CD4-positive, alpha-beta T cell (primary cell): ENCODE measurements at regions of chr19 and their contacts with region 1.

Region 1: GRCh38 chr19:29735800-29736199 is 20.7 kb upstream of the C19orf12 start:
- DNase-seq: no peak
- ATAC-seq: no peak
- H3K4me3 ChIP-seq: no peak overlapping the region
- H3K4me3 Mint-ChIP-seq: no peak overlapping the region
- H3K27ac ChIP-seq: no peak overlapping the region
- H3K27ac Mint-ChIP-seq: no peak overlapping the region
- H3K4me1 ChIP-seq: no peaks in the 10 kb centered on the region
- H3K4me1 Mint-ChIP-seq: no peaks in the 10 kb centered on the region
- H3K27me3 ChIP-seq: no peaks in the 10 kb centered on the region
- H3K27me3 Mint-ChIP-seq: peaks cover 10% of the 10 kb centered on the region
- CTCF ChIP-seq: no peak

Region 2: GRCh38 chr19:29704562-29705558 is 30.9 kb before region 1 on chr19:
- CTCF ChIA-PET with region 1: no interaction called
- POLR2A ChIA-PET with region 1: no interaction called
- intact Hi-C with region 1: no loop called
- DNase-seq: peak in 2 of 14 experiments; percentile 27 to 43
- ATAC-seq: peak; percentile 34
- H3K4me3 ChIP-seq: no peak overlapping the region
- H3K4me3 Mint-ChIP-seq: no peak overlapping the region
- H3K27ac ChIP-seq: no peak overlapping the region
- H3K27ac Mint-ChIP-seq: peak overlapping the region; percentile 85
- H3K4me1 ChIP-seq: peaks cover 21% of the 10 kb centered on the region
- H3K4me1 Mint-ChIP-seq: peaks cover 23% of the 10 kb centered on the region
- H3K27me3 ChIP-seq: no peaks in the 10 kb centered on the region
- H3K27me3 Mint-ChIP-seq: no peaks in the 10 kb centered on the region
- CTCF ChIP-seq: no peak

Region 3: GRCh38 chr19:29724102-29724641 is 11.6 kb before region 1 on chr19:
- CTCF ChIA-PET with region 1: no interaction called
- POLR2A ChIA-PET with region 1: no interaction called
- intact Hi-C with region 1: no loop called
- DNase-seq: peak in 7 of 14 experiments; percentile 9 to 54 (median 41)
- ATAC-seq: peak; percentile 74
- H3K4me3 ChIP-seq: peak overlapping the region; percentile 48
- H3K4me3 Mint-ChIP-seq: peak overlapping the region; percentile 83
- H3K27ac ChIP-seq: no peak overlapping the region
- H3K27ac Mint-ChIP-seq: peak overlapping the region; percentile 53
- H3K4me1 ChIP-seq: peaks cover 13% of the 10 kb centered on the region
- H3K4me1 Mint-ChIP-seq: peaks cover 6% of the 10 kb centered on the region
- H3K27me3 ChIP-seq: peaks cover 5 to 10% of the 10 kb centered on the region in 2 experiments
- H3K27me3 Mint-ChIP-seq: peaks cover 26% of the 10 kb centered on the region
- CTCF ChIP-seq: no peak

Region 4: DNA sequence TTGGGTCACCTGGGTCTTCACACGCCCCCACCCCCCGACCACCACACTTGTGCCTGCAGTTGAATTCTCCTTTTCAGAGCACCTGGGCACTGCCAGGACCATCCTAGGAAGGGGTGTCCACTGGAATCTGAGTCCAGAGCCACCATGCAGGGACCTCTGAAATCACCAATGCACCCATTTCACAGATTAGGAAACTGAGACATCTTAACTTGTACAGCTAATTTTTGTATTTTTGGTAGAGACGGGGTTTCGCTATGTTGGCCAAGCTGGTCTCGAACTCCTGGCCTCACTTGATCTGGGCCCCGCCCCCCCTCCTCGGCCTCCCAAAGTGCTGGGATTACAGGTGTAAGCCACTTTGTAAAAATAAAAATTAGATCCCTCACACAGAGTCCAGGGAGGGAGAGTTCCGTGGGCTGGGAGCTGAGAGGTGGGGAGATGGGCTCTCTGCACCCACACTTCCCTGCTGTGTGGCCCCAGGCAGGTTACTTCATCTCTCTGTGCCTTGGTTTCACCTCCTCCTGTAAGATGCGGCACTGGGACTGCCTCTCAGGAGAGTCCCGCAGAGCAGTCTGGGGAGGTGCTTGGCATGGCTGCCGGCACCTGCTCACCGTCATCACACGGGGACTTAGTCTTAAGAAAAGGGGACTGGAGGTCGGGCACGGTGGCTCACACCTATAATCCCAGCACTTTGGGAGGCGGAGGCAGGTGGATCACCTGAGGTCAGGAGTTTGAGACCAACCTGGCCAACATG is 25.1 kb after region 1 on chr19:
- CTCF ChIA-PET with region 1: interaction called, 8 read pairs
- POLR2A ChIA-PET with region 1: no interaction called
- intact Hi-C with region 1: loop called (anchors 1 kb)
- DNase-seq: no peak
- ATAC-seq: no peak
- H3K4me3 ChIP-seq: no peak overlapping the region
- H3K4me3 Mint-ChIP-seq: no peak overlapping the region
- H3K27ac ChIP-seq: no peak overlapping the region
- H3K27ac Mint-ChIP-seq: no peak overlapping the region
- H3K4me1 ChIP-seq: peaks cover 9% of the 10 kb centered on the region
- H3K4me1 Mint-ChIP-seq: no peaks in the 10 kb centered on the region
- H3K27me3 ChIP-seq: peaks cover 0 to 3% of the 10 kb centered on the region in 2 experiments
- H3K27me3 Mint-ChIP-seq: no peaks in the 10 kb centered on the region
- CTCF ChIP-seq: no peak

Region 5: DNA sequence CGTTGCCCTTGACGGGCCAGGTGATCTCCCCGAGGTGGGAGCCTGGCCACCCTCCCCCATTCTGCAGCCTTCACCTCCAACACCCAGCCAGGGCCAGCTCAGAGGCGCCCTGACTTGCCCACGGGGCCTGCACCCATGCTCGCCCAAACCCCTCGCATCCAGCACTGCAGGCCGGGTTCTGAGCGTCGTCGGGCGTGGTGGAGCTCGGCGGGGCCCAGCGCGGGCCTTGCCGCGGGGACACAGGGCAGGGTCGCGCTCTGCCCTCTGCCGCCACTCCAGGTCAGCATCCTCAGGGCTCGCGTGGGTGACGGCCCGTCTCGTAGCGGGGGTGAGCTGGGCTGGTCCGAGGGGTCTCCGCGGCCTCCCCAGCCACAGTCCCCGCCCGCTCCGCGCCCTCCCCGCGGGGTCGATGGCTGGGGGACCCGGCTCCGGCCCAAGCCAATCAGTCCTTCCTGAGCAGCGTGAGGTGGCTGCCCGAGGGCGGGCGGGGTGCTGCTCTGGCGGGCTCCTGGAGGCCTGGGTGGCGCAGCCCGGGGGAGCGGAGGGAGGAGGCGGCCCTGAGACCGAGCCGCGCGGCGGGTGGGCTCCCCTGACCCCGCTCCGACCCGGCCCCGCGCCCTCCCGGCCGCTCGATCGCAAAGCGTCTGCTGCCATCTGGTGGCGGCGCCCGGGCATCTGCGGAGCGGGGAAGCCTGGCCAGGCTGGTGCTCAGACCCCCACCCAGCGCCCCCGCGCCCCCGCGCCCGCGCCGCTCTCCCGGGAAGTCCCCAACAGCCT is 137.4 kb after region 1 on chr19:
- CTCF ChIA-PET with region 1: interaction called, 14 read pairs
- POLR2A ChIA-PET with region 1: interaction called, 13 read pairs
- intact Hi-C with region 1: loop called (anchors 1 kb)
- DNase-seq: peak; percentile 41 to 84 (median 62)
- ATAC-seq: peak; percentile 83
- H3K4me3 ChIP-seq: peak overlapping the region; percentile 12
- H3K4me3 Mint-ChIP-seq: peak overlapping the region; percentile 70
- H3K27ac ChIP-seq: no peak overlapping the region
- H3K27ac Mint-ChIP-seq: no peak overlapping the region
- H3K4me1 ChIP-seq: peaks cover 17% of the 10 kb centered on the region
- H3K4me1 Mint-ChIP-seq: no peaks in the 10 kb centered on the region
- H3K27me3 ChIP-seq: peaks cover 12 to 13% of the 10 kb centered on the region in 2 experiments
- H3K27me3 Mint-ChIP-seq: peaks cover 38% of the 10 kb centered on the region
- CTCF ChIP-seq: peak; percentile 87

Region 6: DNA sequence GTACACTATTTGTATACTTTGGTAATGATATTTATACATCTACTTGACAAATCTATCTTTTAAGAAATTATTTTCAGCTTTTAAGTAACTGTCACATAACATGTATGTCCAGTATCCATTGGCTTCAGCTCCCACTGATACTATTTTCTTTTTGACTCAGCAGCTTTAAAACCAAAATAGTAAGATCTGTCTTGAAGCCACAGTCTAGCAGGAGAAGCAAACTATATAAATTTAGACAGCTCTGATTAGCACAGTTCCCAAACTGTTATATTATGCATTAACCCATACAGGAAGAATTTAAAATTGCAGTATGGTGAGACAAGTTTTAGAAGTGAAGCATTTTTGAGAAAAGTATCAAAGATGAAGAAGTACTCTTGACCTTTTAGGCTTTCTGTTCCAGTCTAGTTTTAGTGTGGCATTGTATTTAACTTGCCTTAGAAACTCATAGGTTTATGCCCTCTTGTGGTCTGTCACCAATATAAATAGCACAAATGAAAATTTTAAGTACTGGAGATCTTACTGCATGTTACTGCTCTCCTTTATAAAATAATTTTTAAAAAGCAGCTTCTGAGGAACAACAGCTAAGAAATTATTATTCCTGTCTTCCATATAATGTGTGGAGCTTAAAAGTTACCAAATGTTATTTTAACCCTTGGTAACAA is 230.9 kb after region 1 on chr19:
- CTCF ChIA-PET with region 1: no interaction called
- POLR2A ChIA-PET with region 1: no interaction called
- intact Hi-C with region 1: loop called in 1 of 2 experiments (anchors 10 kb)
- DNase-seq: peak in 3 of 14 experiments; percentile 18 to 23 (median 19)
- ATAC-seq: peak; percentile 37
- H3K4me3 ChIP-seq: no peak overlapping the region
- H3K4me3 Mint-ChIP-seq: peak overlapping the region; percentile 17
- H3K27ac ChIP-seq: no peak overlapping the region
- H3K27ac Mint-ChIP-seq: peak overlapping the region; percentile 12
- H3K4me1 ChIP-seq: peaks cover 20% of the 10 kb centered on the region
- H3K4me1 Mint-ChIP-seq: peaks cover 87% of the 10 kb centered on the region
- H3K27me3 ChIP-seq: no peaks in the 10 kb centered on the region
- H3K27me3 Mint-ChIP-seq: no peaks in the 10 kb centered on the region
- CTCF ChIP-seq: peak; percentile 14

Region 7: DNA sequence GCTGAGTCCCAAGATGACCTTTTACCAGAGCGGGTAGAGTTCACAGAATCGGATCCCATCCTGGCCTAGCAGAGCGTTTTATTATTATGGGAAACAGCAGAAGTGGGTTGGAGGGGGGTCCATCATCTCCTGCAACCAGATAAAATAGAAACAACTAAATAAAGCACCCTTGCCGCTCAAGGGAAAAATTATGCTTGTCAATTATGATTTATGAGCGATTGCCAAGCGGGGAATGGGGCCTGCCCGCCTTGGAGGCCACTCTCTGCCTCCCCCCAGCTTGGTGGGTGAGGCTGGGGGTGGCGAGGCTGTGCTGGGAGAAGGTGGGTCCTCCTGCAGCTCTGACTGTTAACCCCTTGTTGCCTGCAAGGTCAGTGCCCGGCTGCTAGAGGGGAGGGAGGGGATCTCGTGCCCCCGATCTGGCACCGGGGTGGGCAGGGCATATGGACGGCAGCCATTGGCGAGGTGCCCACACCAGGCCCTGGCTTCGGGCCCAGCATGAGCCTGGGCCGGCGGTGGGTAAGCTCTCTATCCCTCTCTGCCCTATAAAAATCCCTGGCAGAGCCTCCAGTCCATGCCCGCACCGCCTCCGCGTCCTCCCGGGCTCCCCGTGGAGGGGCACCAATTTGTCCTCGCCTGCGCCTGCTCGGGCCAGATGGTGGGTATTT is 335.3 kb after region 1 on chr19:
- CTCF ChIA-PET with region 1: no interaction called
- POLR2A ChIA-PET with region 1: no interaction called
- intact Hi-C with region 1: no loop called
- DNase-seq: peak in 1 of 14 experiments; percentile 20
- ATAC-seq: no peak
- H3K4me3 ChIP-seq: no peak overlapping the region
- H3K4me3 Mint-ChIP-seq: no peak overlapping the region
- H3K27ac ChIP-seq: no peak overlapping the region
- H3K27ac Mint-ChIP-seq: no peak overlapping the region
- H3K4me1 ChIP-seq: no peaks in the 10 kb centered on the region
- H3K4me1 Mint-ChIP-seq: no peaks in the 10 kb centered on the region
- H3K27me3 ChIP-seq: peaks cover 0 to 6% of the 10 kb centered on the region in 2 experiments
- H3K27me3 Mint-ChIP-seq: no peaks in the 10 kb centered on the region
- CTCF ChIP-seq: no peak

Region 8: GRCh38 chr19:30649934-30650614 is 914.3 kb after region 1 on chr19:
- CTCF ChIA-PET with region 1: no interaction called
- POLR2A ChIA-PET with region 1: no interaction called
- intact Hi-C with region 1: loop called in 1 of 2 experiments (anchors 2 kb)
- DNase-seq: peak in 4 of 14 experiments; percentile 14 to 41 (median 28)
- ATAC-seq: no peak
- H3K4me3 ChIP-seq: no peak overlapping the region
- H3K4me3 Mint-ChIP-seq: no peak overlapping the region
- H3K27ac ChIP-seq: no peak overlapping the region
- H3K27ac Mint-ChIP-seq: no peak overlapping the region
- H3K4me1 ChIP-seq: no peaks in the 10 kb centered on the region
- H3K4me1 Mint-ChIP-seq: no peaks in the 10 kb centered on the region
- H3K27me3 ChIP-seq: peaks cover 15 to 23% of the 10 kb centered on the region in 2 experiments
- H3K27me3 Mint-ChIP-seq: peaks cover 39% of the 10 kb centered on the region
- CTCF ChIP-seq: peak; percentile 49